Caco-2 (cell line): ENCODE measurements at regions of chr14 and their contacts with region 1.

Region 1: GRCh38 chr14:24080888-24081738 is 9.8 kb downstream of the CPNE6 start:
- DNase-seq: peak; percentile 65 to 71
- H3K4me3 ChIP-seq: peak overlapping the region; percentile 71
- H3K4me3 Mint-ChIP-seq: peak overlapping the region; percentile 78
- H3K27ac Mint-ChIP-seq: no peak overlapping the region
- H3K4me1 ChIP-seq: peaks cover 14% of the 10 kb centered on the region
- H3K4me1 Mint-ChIP-seq: peaks cover 8% of the 10 kb centered on the region
- H3K27me3 ChIP-seq: no peaks in the 10 kb centered on the region; the same call in 1 of the 2 replicates
- H3K27me3 Mint-ChIP-seq: no peaks in the 10 kb centered on the region
- CTCF ChIP-seq: no peak

Region 2: DNA sequence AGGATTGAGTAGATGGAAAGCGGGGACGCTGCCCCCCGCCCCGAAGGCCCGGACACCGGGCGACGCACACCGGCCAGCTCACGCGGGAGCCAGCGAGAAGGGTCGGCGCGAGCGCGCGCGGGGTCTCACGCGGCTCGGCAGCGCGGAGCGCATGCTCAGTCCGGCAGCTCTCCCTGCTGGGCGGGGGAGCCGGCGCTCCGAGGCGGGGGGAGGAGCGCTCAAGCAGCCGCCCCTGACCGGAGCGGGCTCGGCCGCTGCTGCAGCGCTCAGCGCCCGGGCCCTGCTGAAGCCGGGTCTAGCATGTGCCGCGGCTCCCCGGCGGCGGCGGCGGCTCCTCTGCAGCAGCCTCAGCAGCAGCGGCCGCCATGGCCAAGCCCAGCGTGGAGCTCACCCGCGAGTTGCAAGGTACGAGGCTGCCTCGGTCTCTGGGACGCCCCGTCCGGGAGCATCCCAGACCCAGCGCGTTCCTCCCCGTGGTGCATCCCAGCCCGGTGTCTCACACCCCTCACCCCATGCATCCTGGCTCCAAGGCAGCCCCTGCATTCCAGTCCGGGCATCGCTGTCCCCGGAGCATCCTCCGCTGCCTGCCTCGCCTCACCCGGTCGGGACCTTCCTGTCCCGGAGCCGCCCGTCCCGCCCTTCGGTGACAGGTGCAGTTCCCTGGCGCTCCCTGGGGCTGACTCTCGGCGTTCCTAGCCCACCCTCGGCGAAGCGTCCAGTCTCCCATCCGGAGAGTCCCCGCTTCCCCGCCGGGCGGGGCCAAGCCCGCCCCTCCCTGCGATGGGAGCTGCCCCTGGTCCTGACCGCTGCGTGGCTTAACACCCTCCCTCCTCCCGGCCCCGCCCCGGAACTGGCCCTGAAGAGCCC is 29.1 kb before region 1 on chr14 and contains the start of gene CARMIL3:
- CTCF ChIA-PET with region 1: interaction called, 3 read pairs
- POLR2A ChIA-PET with region 1: interaction called, 5 read pairs
- intact Hi-C with region 1: loop called (anchors 1 kb)
- DNase-seq: peak; percentile 59 to 73
- H3K4me3 ChIP-seq: peak within 1 kb of the TSS; percentile 65
- H3K4me3 Mint-ChIP-seq: peak within 1 kb of the TSS; percentile 74
- H3K27ac Mint-ChIP-seq: no peak within 1 kb of the TSS
- H3K4me1 ChIP-seq: peaks cover 5% of the 10 kb centered on the region; the same call in 1 of the 2 replicates
- H3K4me1 Mint-ChIP-seq: no peaks in the 10 kb centered on the region
- H3K27me3 ChIP-seq: no peaks in the 10 kb centered on the region
- H3K27me3 Mint-ChIP-seq: peaks cover 11% of the 10 kb centered on the region
- CTCF ChIP-seq: no peak
- total RNA-seq, gene CARMIL3: 0.88 and 1.00 TPM in 2 replicates

Region 3: DNA sequence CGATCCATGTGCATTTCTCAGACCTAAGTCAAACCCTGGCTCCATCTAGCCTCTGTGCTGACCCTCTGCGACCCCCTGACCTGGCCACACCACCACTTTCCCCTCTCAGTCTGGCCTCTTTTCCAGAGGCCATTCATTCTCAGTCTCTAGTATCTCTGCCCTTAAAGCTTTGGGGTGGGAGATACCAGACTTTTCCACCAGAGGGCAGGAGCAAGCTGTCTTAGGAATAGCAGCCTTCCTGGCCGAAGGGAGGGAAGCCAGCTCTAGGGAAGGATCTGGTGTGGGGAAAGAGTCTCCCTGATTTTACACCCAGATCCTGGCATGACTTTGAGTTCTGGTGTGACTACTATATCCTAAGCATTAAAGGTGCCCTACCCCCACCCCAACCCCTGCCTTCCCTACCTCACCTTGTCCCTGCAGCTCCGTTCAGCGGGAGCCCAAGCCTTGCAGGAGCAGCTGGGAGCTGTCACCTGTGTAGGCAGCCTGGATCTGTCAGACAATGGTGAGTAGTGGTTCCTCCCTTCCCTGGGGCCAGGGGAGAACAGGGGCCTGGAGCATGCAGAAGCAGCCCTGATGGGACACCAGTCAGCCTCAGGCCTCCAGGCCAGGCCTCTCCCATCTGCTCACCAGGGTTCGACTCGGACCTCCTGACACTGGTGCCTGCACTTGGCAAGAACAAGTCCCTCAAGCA is 22.7 kb before region 1 on chr14:
- CTCF ChIA-PET with region 1: interaction called, 15 read pairs
- POLR2A ChIA-PET with region 1: no interaction called
- intact Hi-C with region 1: no loop called
- DNase-seq: peak; percentile 70 to 81
- H3K4me3 ChIP-seq: no peak overlapping the region
- H3K4me3 Mint-ChIP-seq: no peak overlapping the region
- H3K27ac Mint-ChIP-seq: no peak overlapping the region
- H3K4me1 ChIP-seq: no peaks in the 10 kb centered on the region; the same call in 1 of the 2 replicates
- H3K4me1 Mint-ChIP-seq: no peaks in the 10 kb centered on the region
- H3K27me3 ChIP-seq: no peaks in the 10 kb centered on the region
- H3K27me3 Mint-ChIP-seq: peaks cover 3% of the 10 kb centered on the region
- CTCF ChIP-seq: peak; percentile 66 to 85

Region 4: GRCh38 chr14:24310646-24311604 is 229.8 kb after region 1 on chr14 and contains the start of gene LTB4R:
- CTCF ChIA-PET with region 1: no interaction called
- POLR2A ChIA-PET with region 1: no interaction called
- intact Hi-C with region 1: no loop called
- DNase-seq: no peak
- H3K4me3 ChIP-seq: no peak within 1 kb of the TSS
- H3K4me3 Mint-ChIP-seq: no peak within 1 kb of the TSS
- H3K27ac Mint-ChIP-seq: no peak within 1 kb of the TSS
- H3K4me1 ChIP-seq: peaks cover 25% of the 10 kb centered on the region
- H3K4me1 Mint-ChIP-seq: peaks cover 27% of the 10 kb centered on the region
- H3K27me3 ChIP-seq: no peaks in the 10 kb centered on the region
- H3K27me3 Mint-ChIP-seq: no peaks in the 10 kb centered on the region
- CTCF ChIP-seq: no peak
- total RNA-seq, gene LTB4R: 7.3 and 7.8 TPM in 2 replicates